WTC11 (cell line): ENCODE measurements at regions of chr11 and their contacts with region 1.

Region 1: DNA sequence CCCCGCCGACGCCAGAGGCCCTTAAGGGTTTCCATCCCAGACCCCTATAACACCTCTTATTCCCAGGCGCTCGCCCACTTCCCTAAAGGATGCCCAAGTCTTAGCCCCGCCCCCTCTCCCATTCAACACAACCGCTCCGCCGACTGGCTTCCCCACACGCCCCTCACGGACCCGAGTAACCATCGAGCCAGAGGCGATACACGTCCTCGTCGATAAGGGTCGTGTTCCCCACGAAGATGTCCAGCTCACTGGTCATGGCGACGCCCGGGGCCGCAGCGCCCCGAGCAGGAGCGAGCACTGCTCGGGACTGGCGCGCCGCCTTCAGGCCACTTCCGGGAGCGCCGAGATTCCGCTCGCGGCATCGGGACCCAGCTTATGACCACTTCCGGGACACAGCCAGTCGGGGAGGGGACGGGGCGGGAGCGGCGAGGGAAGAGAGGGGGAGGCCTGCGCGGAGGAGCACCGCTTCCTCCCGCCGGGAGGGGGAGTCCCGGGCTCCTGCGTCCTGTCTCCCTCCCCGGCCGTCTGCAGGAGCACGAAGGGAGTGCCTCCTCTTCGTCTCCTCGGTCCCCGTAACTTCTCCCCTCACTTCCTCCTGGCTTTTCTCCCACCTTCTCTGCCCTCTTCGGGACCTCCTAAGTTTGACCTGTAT is at the start of gene FIBP:
- DNase-seq: peak; percentile 98
- ATAC-seq: peak; percentile 64
- H3K4me3 Mint-ChIP-seq: peak within 1 kb of the TSS; percentile 97
- H3K27ac Mint-ChIP-seq: peak within 1 kb of the TSS; percentile 98
- H3K4me1 Mint-ChIP-seq: peaks cover 44% of the 10 kb centered on the region
- H3K27me3 Mint-ChIP-seq: peaks cover 15% of the 10 kb centered on the region
- CTCF ChIP-seq: peak; percentile 57
- total RNA-seq, gene FIBP: 91.6 to 93.1 TPM (median 92.2 TPM) in 3 replicates

Region 2: DNA sequence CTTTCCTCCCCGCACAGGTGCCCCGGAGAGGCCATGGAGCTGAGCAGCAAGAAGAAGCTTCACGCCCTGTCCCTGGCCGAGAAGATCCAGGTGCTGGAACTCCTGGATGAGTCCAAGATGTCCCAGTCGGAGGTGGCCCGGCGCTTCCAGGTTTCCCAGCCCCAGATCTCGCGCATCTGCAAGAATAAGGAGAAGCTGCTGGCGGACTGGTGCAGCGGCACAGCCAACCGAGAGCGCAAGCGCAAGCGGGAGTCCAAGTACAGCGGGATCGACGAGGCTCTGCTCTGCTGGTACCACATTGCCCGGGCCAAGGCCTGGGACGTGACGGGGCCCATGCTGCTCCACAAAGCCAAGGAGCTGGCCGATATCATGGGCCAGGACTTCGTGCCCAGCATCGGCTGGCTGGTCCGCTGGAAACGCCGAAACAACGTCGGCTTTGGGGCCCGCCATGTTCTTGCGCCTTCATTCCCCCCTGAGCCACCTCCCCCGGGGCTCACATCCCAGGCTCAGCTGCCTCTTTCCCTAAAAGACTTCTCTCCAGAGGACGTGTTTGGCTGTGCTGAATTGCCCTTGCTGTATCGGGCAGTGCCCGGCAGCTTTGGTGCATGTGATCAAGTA is 532.4 kb before region 1 on chr11:
- CTCF ChIA-PET with region 1: no interaction called
- POLR2A ChIA-PET with region 1: no interaction called
- DNase-seq: peak; percentile 42
- ATAC-seq: no peak
- H3K4me3 Mint-ChIP-seq: peak overlapping the region; percentile 81
- H3K27ac Mint-ChIP-seq: no peak overlapping the region
- H3K4me1 Mint-ChIP-seq: peaks cover 16% of the 10 kb centered on the region
- H3K27me3 Mint-ChIP-seq: peaks cover 30% of the 10 kb centered on the region
- CTCF ChIP-seq: no peak

Region 3: GRCh38 chr11:65637794-65638317 is 250.4 kb before region 1 on chr11 and contains the start of gene SIPA1:
- CTCF ChIA-PET with region 1: interaction called, 18 read pairs
- POLR2A ChIA-PET with region 1: no interaction called
- DNase-seq: peak; percentile 89
- ATAC-seq: peak; percentile 70
- H3K4me3 Mint-ChIP-seq: peak within 1 kb of the TSS; percentile 81
- H3K27ac Mint-ChIP-seq: peak within 1 kb of the TSS; percentile 94
- H3K4me1 Mint-ChIP-seq: peaks cover 22% of the 10 kb centered on the region
- H3K27me3 Mint-ChIP-seq: no peaks in the 10 kb centered on the region
- CTCF ChIP-seq: no peak
- total RNA-seq, gene SIPA1: 63.3 to 71.7 TPM (median 65.4 TPM) in 3 replicates

Region 4: DNA sequence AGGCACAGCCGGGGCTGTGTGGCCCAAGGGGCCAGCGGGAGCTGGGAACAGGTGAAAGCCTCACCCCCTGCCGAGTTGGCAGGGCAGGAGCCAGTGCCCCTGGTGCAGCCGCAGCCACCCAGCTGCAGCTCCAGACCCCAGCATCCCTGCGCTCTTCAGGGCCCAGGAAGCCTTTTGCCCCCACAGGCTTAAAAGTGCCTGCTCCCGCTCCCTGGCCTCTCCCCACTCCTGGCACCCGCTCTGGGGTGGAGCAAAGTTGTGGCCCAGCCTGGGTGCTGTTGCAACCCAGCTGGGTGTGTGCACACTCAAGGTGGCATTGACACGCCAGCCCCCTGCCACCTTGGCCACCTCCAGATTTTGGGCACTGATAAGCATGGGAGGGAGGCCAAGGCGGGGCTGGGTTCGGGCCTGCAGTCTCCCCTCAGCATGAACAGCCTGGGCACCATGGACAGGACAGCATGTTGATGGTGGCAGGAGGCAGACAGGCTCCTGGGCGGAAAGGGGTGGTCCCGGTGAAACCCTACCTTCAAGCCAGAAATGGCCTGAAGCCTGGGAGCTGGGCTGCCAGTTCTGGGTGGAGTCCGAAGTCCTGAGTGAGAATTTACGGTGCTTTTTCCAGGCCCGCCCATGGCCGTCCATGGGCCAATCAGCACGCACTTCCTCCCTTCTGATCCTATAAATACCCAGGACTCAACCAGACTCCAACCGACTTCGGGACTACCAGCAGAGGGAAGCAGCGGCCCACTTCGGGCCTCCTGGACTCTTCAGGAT is 144.2 kb before region 1 on chr11:
- CTCF ChIA-PET with region 1: interaction called, 20 read pairs
- POLR2A ChIA-PET with region 1: no interaction called
- DNase-seq: peak; percentile 71
- ATAC-seq: peak; percentile 99
- H3K4me3 Mint-ChIP-seq: no peak overlapping the region
- H3K27ac Mint-ChIP-seq: no peak overlapping the region
- H3K4me1 Mint-ChIP-seq: no peaks in the 10 kb centered on the region
- H3K27me3 Mint-ChIP-seq: peaks cover 38% of the 10 kb centered on the region
- CTCF ChIP-seq: no peak

Region 5: GRCh38 chr11:65850831-65851811 is 37.2 kb before region 1 on chr11:
- CTCF ChIA-PET with region 1: interaction called, 134 read pairs
- POLR2A ChIA-PET with region 1: interaction called, 16 read pairs
- DNase-seq: peak; percentile 63
- ATAC-seq: peak; percentile 65
- H3K4me3 Mint-ChIP-seq: no peak overlapping the region
- H3K27ac Mint-ChIP-seq: peak overlapping the region; percentile 41; the same call in 1 of the 2 replicates
- H3K4me1 Mint-ChIP-seq: peaks cover 17% of the 10 kb centered on the region
- H3K27me3 Mint-ChIP-seq: peaks cover 10% of the 10 kb centered on the region
- CTCF ChIP-seq: peak; percentile 69

Region 6: GRCh38 chr11:65906602-65907001 is 18.3 kb after region 1 on chr11:
- CTCF ChIA-PET with region 1: interaction called, 41 read pairs
- POLR2A ChIA-PET with region 1: interaction called, 8 read pairs
- DNase-seq: no peak
- ATAC-seq: no peak
- H3K4me3 Mint-ChIP-seq: no peak overlapping the region
- H3K27ac Mint-ChIP-seq: no peak overlapping the region
- H3K4me1 Mint-ChIP-seq: peaks cover 2% of the 10 kb centered on the region
- H3K27me3 Mint-ChIP-seq: peaks cover 62% of the 10 kb centered on the region
- CTCF ChIP-seq: no peak

Region 7: DNA sequence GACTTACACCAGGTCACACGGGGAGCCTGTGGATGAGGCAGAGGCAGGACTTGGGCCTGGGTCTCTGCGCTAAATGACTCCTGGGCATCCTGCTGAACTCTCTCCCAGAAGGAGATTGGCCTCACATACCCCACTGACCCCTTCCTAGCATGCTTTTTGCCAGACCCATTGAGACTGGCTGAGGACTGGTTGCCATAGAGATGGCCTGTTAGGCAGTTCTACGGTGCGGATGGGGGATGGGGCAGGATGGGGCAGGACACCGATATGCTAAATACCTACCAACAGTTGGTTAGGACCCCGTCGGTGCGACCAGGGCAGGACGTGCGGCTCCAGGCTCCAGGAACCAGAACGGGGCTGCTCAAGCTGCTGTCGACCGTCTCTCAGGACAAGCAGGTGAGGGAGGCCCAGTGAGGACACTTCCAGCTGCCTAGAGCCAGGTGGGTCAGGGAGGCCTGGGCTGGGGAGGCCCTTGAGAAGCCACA is 57.2 kb after region 1 on chr11 and contains the start of gene TSGA10IP:
- CTCF ChIA-PET with region 1: interaction called, 29 read pairs
- POLR2A ChIA-PET with region 1: no interaction called
- DNase-seq: peak; percentile 84
- ATAC-seq: peak; percentile 92
- H3K4me3 Mint-ChIP-seq: peak within 1 kb of the TSS; percentile 59
- H3K27ac Mint-ChIP-seq: peak within 1 kb of the TSS; percentile 89
- H3K4me1 Mint-ChIP-seq: peaks cover 40% of the 10 kb centered on the region
- H3K27me3 Mint-ChIP-seq: peaks cover 6% of the 10 kb centered on the region; the same call in 1 of the 2 replicates
- CTCF ChIP-seq: no peak
- total RNA-seq, gene TSGA10IP: 3.4 to 4.5 TPM (median 4.1 TPM) in 3 replicates

Region 8: GRCh38 chr11:66045177-66045639 is 156.9 kb after region 1 on chr11:
- CTCF ChIA-PET with region 1: interaction called, 14 read pairs
- POLR2A ChIA-PET with region 1: no interaction called
- DNase-seq: peak; percentile 93
- ATAC-seq: peak; percentile 78
- H3K4me3 Mint-ChIP-seq: no peak overlapping the region
- H3K27ac Mint-ChIP-seq: no peak overlapping the region; the same call in 1 of the 2 replicates
- H3K4me1 Mint-ChIP-seq: peaks cover 29% of the 10 kb centered on the region
- H3K27me3 Mint-ChIP-seq: no peaks in the 10 kb centered on the region
- CTCF ChIP-seq: peak; percentile 98